ENCODE measurements at regions of chr11 and their contacts with region 1.

Region 1: DNA sequence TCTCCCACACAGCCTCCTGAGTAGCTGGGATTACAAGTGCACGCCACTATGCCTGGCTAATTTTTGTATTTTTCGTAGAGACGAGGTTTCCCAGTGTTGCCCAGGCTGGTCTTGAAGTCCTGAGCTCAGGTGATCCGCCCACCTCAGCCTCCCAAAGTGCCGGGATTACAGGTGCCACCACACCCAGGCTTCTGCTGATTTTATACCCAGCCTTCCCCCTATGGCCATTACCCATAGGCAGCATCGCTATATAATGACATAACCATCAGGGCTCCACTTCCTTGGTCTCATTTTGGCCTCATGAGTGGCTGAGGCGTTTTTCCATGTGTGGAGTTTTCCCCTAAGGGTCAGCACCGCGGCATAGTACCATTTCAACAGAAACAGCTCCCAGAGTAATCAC is 60.6 kb upstream of the RAB1B start:
- DNase-seq: no peak
- H3K4me3 Mint-ChIP-seq: no peak overlapping the region
- H3K27ac Mint-ChIP-seq: no peak overlapping the region
- H3K4me1 Mint-ChIP-seq: no peaks in the 10 kb centered on the region
- H3K27me3 Mint-ChIP-seq: no peaks in the 10 kb centered on the region

Region 2: DNA sequence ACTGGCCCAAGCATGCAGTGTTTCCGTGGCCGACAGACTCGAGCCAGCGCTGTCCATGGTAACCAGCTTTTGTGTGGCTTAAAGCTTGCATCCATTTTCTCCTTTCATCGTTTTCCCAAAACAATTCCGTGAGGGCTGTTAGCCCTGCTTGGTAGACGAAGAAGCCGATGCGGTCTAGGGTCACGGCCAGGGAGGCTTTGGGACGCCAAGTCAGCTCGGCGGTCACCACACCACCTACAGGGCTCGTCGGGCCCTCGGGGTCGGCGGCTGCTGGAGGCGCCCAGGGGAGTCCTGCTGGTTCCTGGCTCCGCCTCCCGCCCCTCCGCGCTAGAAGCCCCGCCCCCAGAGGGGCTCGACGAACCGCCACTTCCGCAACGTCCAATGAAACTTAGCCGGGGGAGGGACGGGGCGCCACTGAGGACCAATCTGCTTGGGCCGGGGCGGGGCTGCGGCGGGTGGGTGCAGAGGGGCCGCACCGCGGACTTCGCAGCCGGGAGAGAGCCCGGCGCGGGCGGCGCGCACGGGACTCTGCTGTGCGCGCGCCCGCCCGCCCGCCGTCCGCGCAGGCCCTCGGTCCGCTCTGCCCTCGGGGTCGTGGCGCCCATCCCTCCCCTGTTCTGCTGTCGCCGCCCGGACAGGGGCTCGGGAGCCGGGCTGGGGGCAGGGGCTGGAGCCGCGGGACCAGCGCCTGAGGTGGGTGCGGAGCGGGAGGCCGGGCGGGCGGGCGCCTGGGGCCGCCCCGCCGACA is 853.4 kb before region 1 on chr11 and contains the start of gene TIGD3:
- CTCF ChIA-PET with region 1: no interaction called
- POLR2A ChIA-PET with region 1: no interaction called
- intact Hi-C with region 1: no loop called
- DNase-seq: peak; percentile 98
- H3K4me3 Mint-ChIP-seq: peak within 1 kb of the TSS; percentile 80
- H3K27ac Mint-ChIP-seq: peak within 1 kb of the TSS; percentile 60
- H3K4me1 Mint-ChIP-seq: peaks cover 12% of the 10 kb centered on the region
- H3K27me3 Mint-ChIP-seq: no peaks in the 10 kb centered on the region
- total RNA-seq, gene TIGD3: 0.73 to 1.00 TPM

Region 3: GRCh38 chr11:66232769-66233168 is 24.9 kb after region 1 on chr11:
- CTCF ChIA-PET with region 1: no interaction called
- POLR2A ChIA-PET with region 1: no interaction called
- intact Hi-C with region 1: loop called (anchors 1 kb)
- DNase-seq: no peak
- H3K4me3 Mint-ChIP-seq: no peak overlapping the region
- H3K27ac Mint-ChIP-seq: no peak overlapping the region
- H3K4me1 Mint-ChIP-seq: no peaks in the 10 kb centered on the region
- H3K27me3 Mint-ChIP-seq: no peaks in the 10 kb centered on the region

Region 4: GRCh38 chr11:66466225-66467027 is 258.6 kb after region 1 on chr11 and contains the start of gene PELI3:
- CTCF ChIA-PET with region 1: no interaction called
- POLR2A ChIA-PET with region 1: no interaction called
- intact Hi-C with region 1: no loop called
- DNase-seq: peak; percentile 96
- H3K4me3 Mint-ChIP-seq: peak within 1 kb of the TSS; percentile 79
- H3K27ac Mint-ChIP-seq: peak within 1 kb of the TSS; percentile 64
- H3K4me1 Mint-ChIP-seq: peaks cover 31% of the 10 kb centered on the region
- H3K27me3 Mint-ChIP-seq: no peaks in the 10 kb centered on the region
- total RNA-seq, gene PELI3: 7.0 to 8.5 TPM